ENCODE measurements at regions of chr1 and their contacts with region 1.

Region 1: GRCh38 chr1:233790662-233791375 is 113.7 kb upstream of the SLC35F3 start:
- DNase-seq: peak in 1 of 2 donors; percentile 8
- ATAC-seq: peak; percentile 91

Region 2: DNA sequence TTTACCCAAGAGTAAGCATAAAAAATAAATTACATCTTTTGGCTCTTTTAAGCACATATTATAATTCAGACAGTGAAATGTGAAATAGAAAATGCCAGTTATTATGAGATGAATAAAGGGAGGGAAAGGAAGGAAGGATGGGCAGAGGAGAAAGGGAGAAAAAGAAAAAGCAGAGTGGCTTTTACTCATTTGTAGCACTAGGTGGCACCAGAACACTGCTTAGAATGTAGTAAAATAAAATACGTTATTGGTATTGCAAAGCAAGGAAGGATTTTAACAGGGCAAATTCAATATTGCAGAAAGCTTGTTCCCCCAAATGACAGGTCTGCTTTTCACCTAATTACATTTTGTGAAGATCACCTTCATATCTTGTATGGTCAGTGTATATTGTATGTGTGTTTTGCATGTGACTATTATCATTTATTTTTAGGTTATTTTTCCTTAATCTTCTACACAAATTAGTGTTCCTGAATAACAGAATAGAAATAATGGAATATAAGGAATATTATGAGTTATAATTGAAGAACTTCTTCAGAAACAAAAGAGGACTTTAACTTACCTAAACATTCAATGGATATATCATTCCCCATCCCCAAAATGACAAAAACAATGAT is 486.2 kb before region 1 on chr1:
- intact Hi-C with region 1: loop called in 1 of 2 experiments (anchors 10 kb)
- DNase-seq: no peak
- ATAC-seq: peak; percentile 56

Region 3: GRCh38 chr1:233440951-233441401 is 349.8 kb before region 1 on chr1:
- intact Hi-C with region 1: loop called in 1 of 2 experiments (anchors 5 kb)
- DNase-seq: no peak
- ATAC-seq: peak; percentile 56

Region 4: GRCh38 chr1:233982827-233983518 is 192.2 kb after region 1 on chr1:
- intact Hi-C with region 1: no loop called
- DNase-seq: no peak
- ATAC-seq: no peak